Mammary epithelial cell (primary cell): ENCODE measurements at regions of chr14 and their contacts with region 1.

Region 1: DNA sequence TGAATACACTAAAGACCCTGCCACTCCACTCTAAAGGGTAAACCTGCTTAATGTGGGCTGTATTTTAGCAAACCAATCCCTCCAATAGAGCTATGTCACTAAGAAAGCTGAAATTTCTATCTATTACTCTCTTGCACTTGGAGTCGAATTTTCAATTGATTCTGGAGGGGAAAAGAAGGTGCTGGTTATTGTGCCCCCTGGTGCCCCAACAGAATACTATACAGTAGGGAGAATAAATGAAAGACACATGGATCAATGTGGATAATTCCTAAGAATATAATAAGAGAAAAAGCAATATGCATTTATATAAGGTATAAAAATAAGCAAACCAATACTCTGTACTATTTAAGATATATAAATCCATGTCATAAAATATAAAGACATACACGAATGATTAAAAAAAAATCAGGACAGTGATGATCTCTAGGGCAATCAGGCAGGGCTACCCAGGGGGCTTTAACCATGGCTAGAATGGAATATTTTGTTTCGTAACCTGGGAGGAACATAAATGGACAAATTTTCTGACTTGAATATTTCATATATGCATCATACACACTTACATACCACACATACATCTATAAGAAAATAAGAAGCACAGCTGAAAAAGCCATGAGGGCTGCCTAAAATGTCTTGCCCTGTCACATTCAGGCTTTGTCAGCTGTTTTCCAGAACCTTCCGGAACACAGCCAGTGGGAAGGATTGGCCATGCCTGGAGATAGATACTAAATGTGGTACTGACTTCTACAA is 54.4 kb downstream of the EFCAB11 start:
- DNase-seq: no peak
- H3K4me3 ChIP-seq: no peak overlapping the region
- H3K27ac ChIP-seq: no peak overlapping the region
- H3K4me1 ChIP-seq: no peaks in the 10 kb centered on the region
- H3K27me3 ChIP-seq: no peaks in the 10 kb centered on the region
- CTCF ChIP-seq: peak; percentile 46 to 61

Region 2: DNA sequence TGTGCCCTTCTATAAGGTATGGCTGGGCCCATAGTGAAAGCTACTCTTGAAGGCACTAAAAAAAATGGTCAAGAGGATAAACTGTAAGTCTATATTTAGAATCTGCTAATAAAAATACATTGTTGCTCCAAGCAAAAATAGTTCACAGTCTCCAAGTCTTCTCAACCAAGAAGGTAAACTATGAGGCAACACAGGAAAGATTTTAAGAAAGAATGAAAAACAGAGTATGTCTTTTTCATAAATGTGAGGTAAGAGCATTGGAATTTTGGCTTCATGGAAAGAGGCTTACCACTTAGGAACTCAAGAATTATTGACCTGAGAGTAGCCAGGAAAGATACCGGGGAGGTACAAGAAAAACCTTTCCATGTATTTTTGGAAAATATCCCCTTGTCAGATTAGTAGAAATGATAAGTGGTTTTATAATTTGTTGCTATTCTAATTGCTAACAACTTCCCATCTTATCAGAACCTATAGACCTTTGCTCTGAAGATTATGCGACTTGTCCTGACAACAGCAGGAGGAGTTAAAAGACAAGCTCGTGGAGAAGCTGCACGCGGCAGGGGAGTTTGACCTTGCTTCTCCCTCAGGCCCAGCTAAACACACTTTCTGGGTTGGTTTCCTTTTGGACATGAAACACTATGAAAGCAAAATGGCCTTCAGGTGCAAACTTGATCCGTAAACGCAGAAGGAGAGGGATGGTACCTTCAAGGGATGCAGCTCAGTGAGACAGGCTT is 721.1 kb before region 1 on chr14:
- CTCF ChIA-PET with region 1: no interaction called
- dilution Hi-C with region 1: no loop called
- in situ Hi-C with region 1: no loop called
- intact Hi-C with region 1: loop called (anchors 5 kb)
- DNase-seq: no peak
- H3K4me3 ChIP-seq: no peak overlapping the region
- H3K27ac ChIP-seq: no peak overlapping the region
- H3K4me1 ChIP-seq: no peaks in the 10 kb centered on the region
- H3K27me3 ChIP-seq: no peaks in the 10 kb centered on the region
- CTCF ChIP-seq: no peak

Region 3: GRCh38 chr14:89618811-89619551 is 281.1 kb before region 1 on chr14:
- CTCF ChIA-PET with region 1: no interaction called
- dilution Hi-C with region 1: no loop called
- in situ Hi-C with region 1: no loop called
- intact Hi-C with region 1: loop called (anchors 5 kb)
- DNase-seq: peak; percentile 41
- H3K4me3 ChIP-seq: peak overlapping the region; percentile 61 to 85 (median 70)
- H3K27ac ChIP-seq: peak overlapping the region; percentile 40
- H3K4me1 ChIP-seq: peaks cover 9% of the 10 kb centered on the region
- H3K27me3 ChIP-seq: no peaks in the 10 kb centered on the region
- CTCF ChIP-seq: no peak

Region 4: GRCh38 chr14:89681086-89682018 is 218.7 kb before region 1 on chr14:
- CTCF ChIA-PET with region 1: no interaction called
- dilution Hi-C with region 1: no loop called
- in situ Hi-C with region 1: no loop called
- intact Hi-C with region 1: no loop called
- DNase-seq: no peak
- H3K4me3 ChIP-seq: no peak overlapping the region
- H3K27ac ChIP-seq: no peak overlapping the region
- H3K4me1 ChIP-seq: no peaks in the 10 kb centered on the region
- H3K27me3 ChIP-seq: no peaks in the 10 kb centered on the region
- CTCF ChIP-seq: no peak

Region 5: GRCh38 chr14:89767861-89768268 is 132.2 kb before region 1 on chr14:
- CTCF ChIA-PET with region 1: no interaction called
- dilution Hi-C with region 1: no loop called
- in situ Hi-C with region 1: no loop called
- intact Hi-C with region 1: loop called (anchors 1 kb)
- DNase-seq: peak; percentile 25
- H3K4me3 ChIP-seq: no peak overlapping the region
- H3K27ac ChIP-seq: no peak overlapping the region
- H3K4me1 ChIP-seq: no peaks in the 10 kb centered on the region
- H3K27me3 ChIP-seq: no peaks in the 10 kb centered on the region
- CTCF ChIP-seq: peak; percentile 37 to 74